ENCODE measurements at regions of chr22 and their contacts with region 1.

Region 1: GRCh38 chr22:20079745-20080444 is at the start of gene DGCR8:
- DNase-seq: peak; percentile 95
- H3K4me3 ChIP-seq: peak within 1 kb of the TSS; percentile 65 to 67
- H3K27ac ChIP-seq: peak within 1 kb of the TSS; percentile 75 to 86
- H3K4me1 ChIP-seq: peaks cover 12% of the 10 kb centered on the region
- H3K27me3 ChIP-seq: no peaks in the 10 kb centered on the region
- CTCF ChIP-seq: peak in 1 of 4 experiments; percentile 33
- POLR2A ChIP-seq: peak; percentile 35
- total RNA-seq, gene DGCR8: 20.9 to 47.6 TPM

Region 2: GRCh38 chr22:20116951-20117645 is 37.2 kb after region 1 on chr22 and contains the start of gene TRMT2A:
- intact Hi-C with region 1: loop called (anchors 2 kb)
- DNase-seq: peak; percentile 97
- H3K4me3 ChIP-seq: peak within 1 kb of the TSS; percentile 80 to 88
- H3K27ac ChIP-seq: peak within 1 kb of the TSS; percentile 63 to 83
- H3K4me1 ChIP-seq: peaks cover 3% of the 10 kb centered on the region
- H3K27me3 ChIP-seq: no peaks in the 10 kb centered on the region
- CTCF ChIP-seq: peak in 2 of 4 experiments; percentile 34 to 38
- POLR2A ChIP-seq: peak; percentile 37
- total RNA-seq, gene TRMT2A: 65.8 to 123 TPM

Region 3: GRCh38 chr22:20130739-20131596 is 51.1 kb after region 1 on chr22:
- intact Hi-C with region 1: loop called (anchors 5 kb)
- DNase-seq: peak; percentile 78
- H3K4me3 ChIP-seq: peak overlapping the region; percentile 82 to 99
- H3K27ac ChIP-seq: peak overlapping the region; percentile 79 to 90
- H3K4me1 ChIP-seq: peaks cover 9% of the 10 kb centered on the region
- H3K27me3 ChIP-seq: no peaks in the 10 kb centered on the region
- CTCF ChIP-seq: no peak
- POLR2A ChIP-seq: peak; percentile 14

Region 4: GRCh38 chr22:20777420-20778177 is 697.7 kb after region 1 on chr22:
- intact Hi-C with region 1: no loop called
- DNase-seq: peak; percentile 68
- H3K4me3 ChIP-seq: no peak overlapping the region
- H3K27ac ChIP-seq: peak overlapping the region; percentile 69 to 83
- H3K4me1 ChIP-seq: no peaks in the 10 kb centered on the region
- H3K27me3 ChIP-seq: no peaks in the 10 kb centered on the region
- CTCF ChIP-seq: peak in 3 of 4 experiments; percentile 18 to 44 (median 20)
- POLR2A ChIP-seq: no peak

Measured in prostate gland (tissue), 2 donors.